ENCODE measurements at regions of chr3 and their contacts with region 1.

Region 1: GRCh38 chr3:100185847-100186246 is 71.5 kb upstream of the FILIP1L start:
- DNase-seq: peak; percentile 21
- H3K4me3 ChIP-seq: no peak overlapping the region
- H3K27ac ChIP-seq: no peak overlapping the region
- H3K4me1 ChIP-seq: peaks cover 14% of the 10 kb centered on the region
- H3K27me3 ChIP-seq: no peaks in the 10 kb centered on the region
- CTCF ChIP-seq: no peak

Region 2: GRCh38 chr3:100175637-100176280 is 10.1 kb before region 1 on chr3:
- CTCF ChIA-PET with region 1: interaction called, 14 read pairs
- POLR2A ChIA-PET with region 1: no interaction called
- intact Hi-C with region 1: no loop called
- DNase-seq: peak; percentile 68
- H3K4me3 ChIP-seq: no peak overlapping the region
- H3K27ac ChIP-seq: no peak overlapping the region
- H3K4me1 ChIP-seq: peaks cover 10% of the 10 kb centered on the region
- H3K27me3 ChIP-seq: no peaks in the 10 kb centered on the region
- CTCF ChIP-seq: no peak